ENCODE measurements at regions of chr16 and their contacts with region 1.

Region 1: GRCh38 chr16:78240462-78241222 is 141.2 kb downstream of the WWOX start:
- DNase-seq: peak; percentile 93 to 96
- H3K4me3 ChIP-seq: no peak overlapping the region
- H3K4me3 Mint-ChIP-seq: peak overlapping the region; percentile 52
- H3K27ac Mint-ChIP-seq: peak overlapping the region; percentile 97
- H3K4me1 ChIP-seq: peaks cover 65% of the 10 kb centered on the region
- H3K4me1 Mint-ChIP-seq: peaks cover 83% of the 10 kb centered on the region
- H3K27me3 ChIP-seq: no peaks in the 10 kb centered on the region
- H3K27me3 Mint-ChIP-seq: no peaks in the 10 kb centered on the region
- CTCF ChIP-seq: peak; percentile 60 to 73

Region 2: GRCh38 chr16:78122774-78123315 is 117.8 kb before region 1 on chr16:
- CTCF ChIA-PET with region 1: interaction called, 6 read pairs
- POLR2A ChIA-PET with region 1: no interaction called
- intact Hi-C with region 1: loop called (anchors 1 kb)
- DNase-seq: peak in 1 of 2 experiments; percentile 59
- H3K4me3 ChIP-seq: no peak overlapping the region
- H3K4me3 Mint-ChIP-seq: peak overlapping the region; percentile 17
- H3K27ac Mint-ChIP-seq: no peak overlapping the region
- H3K4me1 ChIP-seq: 0 out of 2 replicates have a peak, but pooled peaks cover 5% of the 10 kb centered on the region
- H3K4me1 Mint-ChIP-seq: peaks cover 25% of the 10 kb centered on the region
- H3K27me3 ChIP-seq: no peaks in the 10 kb centered on the region
- H3K27me3 Mint-ChIP-seq: no peaks in the 10 kb centered on the region
- CTCF ChIP-seq: peak; percentile 31 to 75

Region 3: GRCh38 chr16:78209951-78210661 is 30.5 kb before region 1 on chr16:
- CTCF ChIA-PET with region 1: interaction called, 4 read pairs
- POLR2A ChIA-PET with region 1: interaction called, 6 read pairs
- intact Hi-C with region 1: loop called (anchors 1 kb)
- DNase-seq: peak in 1 of 2 experiments; percentile 20
- H3K4me3 ChIP-seq: no peak overlapping the region
- H3K4me3 Mint-ChIP-seq: no peak overlapping the region
- H3K27ac Mint-ChIP-seq: peak overlapping the region; percentile 92
- H3K4me1 ChIP-seq: peaks cover 45% of the 10 kb centered on the region
- H3K4me1 Mint-ChIP-seq: peaks cover 49% of the 10 kb centered on the region
- H3K27me3 ChIP-seq: no peaks in the 10 kb centered on the region
- H3K27me3 Mint-ChIP-seq: no peaks in the 10 kb centered on the region
- CTCF ChIP-seq: no peak

Region 4: GRCh38 chr16:78292903-78293347 is 52.3 kb after region 1 on chr16:
- CTCF ChIA-PET with region 1: no interaction called
- POLR2A ChIA-PET with region 1: interaction called, 3 read pairs
- intact Hi-C with region 1: loop called (anchors 1 kb)
- DNase-seq: peak; percentile 49 to 58
- H3K4me3 ChIP-seq: no peak overlapping the region
- H3K4me3 Mint-ChIP-seq: peak overlapping the region; percentile 5
- H3K27ac Mint-ChIP-seq: peak overlapping the region; percentile 48
- H3K4me1 ChIP-seq: peaks cover 31% of the 10 kb centered on the region
- H3K4me1 Mint-ChIP-seq: peaks cover 36% of the 10 kb centered on the region
- H3K27me3 ChIP-seq: no peaks in the 10 kb centered on the region
- H3K27me3 Mint-ChIP-seq: no peaks in the 10 kb centered on the region
- CTCF ChIP-seq: no peak

Region 5: DNA sequence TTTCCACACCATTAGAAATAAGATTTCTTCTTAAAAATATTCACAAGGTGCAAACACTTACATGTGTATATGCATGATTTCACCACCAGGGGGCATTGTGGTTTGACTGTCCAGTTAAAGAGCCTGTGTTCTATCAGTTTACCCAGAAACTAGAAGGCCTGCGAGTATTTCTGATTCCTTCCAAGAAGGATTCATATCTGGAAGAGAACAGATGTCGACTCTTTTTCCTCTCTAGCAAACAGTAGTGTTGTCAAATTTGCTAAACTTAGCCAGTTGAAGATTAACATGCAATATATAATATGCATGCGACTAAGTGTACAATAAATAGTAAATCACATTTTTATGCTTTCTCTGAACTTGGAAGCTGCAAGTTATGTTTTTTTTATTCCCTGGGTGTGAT is 263.0 kb after region 1 on chr16:
- CTCF ChIA-PET with region 1: interaction called, 3 read pairs
- POLR2A ChIA-PET with region 1: no interaction called
- intact Hi-C with region 1: loop called (anchors 1 kb)
- DNase-seq: peak; percentile 44 to 64
- H3K4me3 ChIP-seq: no peak overlapping the region
- H3K4me3 Mint-ChIP-seq: no peak overlapping the region
- H3K27ac Mint-ChIP-seq: no peak overlapping the region
- H3K4me1 ChIP-seq: peaks cover 25% of the 10 kb centered on the region
- H3K4me1 Mint-ChIP-seq: peaks cover 26% of the 10 kb centered on the region
- H3K27me3 ChIP-seq: no peaks in the 10 kb centered on the region
- H3K27me3 Mint-ChIP-seq: no peaks in the 10 kb centered on the region
- CTCF ChIP-seq: peak; percentile 70 to 88

Region 6: GRCh38 chr16:78551487-78552085 is 310.9 kb after region 1 on chr16:
- CTCF ChIA-PET with region 1: no interaction called
- POLR2A ChIA-PET with region 1: no interaction called
- intact Hi-C with region 1: no loop called
- DNase-seq: no peak
- H3K4me3 ChIP-seq: no peak overlapping the region
- H3K4me3 Mint-ChIP-seq: no peak overlapping the region
- H3K27ac Mint-ChIP-seq: no peak overlapping the region
- H3K4me1 ChIP-seq: no peaks in the 10 kb centered on the region
- H3K4me1 Mint-ChIP-seq: peaks cover 6% of the 10 kb centered on the region
- H3K27me3 ChIP-seq: no peaks in the 10 kb centered on the region
- H3K27me3 Mint-ChIP-seq: no peaks in the 10 kb centered on the region
- CTCF ChIP-seq: no peak

Region 7: GRCh38 chr16:79601931-79602627 is 1361.4 kb after region 1 on chr16:
- CTCF ChIA-PET with region 1: no interaction called
- POLR2A ChIA-PET with region 1: no interaction called
- intact Hi-C with region 1: loop called (anchors 5 kb)
- DNase-seq: peak; percentile 77 to 83
- H3K4me3 ChIP-seq: peak overlapping the region; percentile 56
- H3K4me3 Mint-ChIP-seq: peak overlapping the region; percentile 96
- H3K27ac Mint-ChIP-seq: no peak overlapping the region
- H3K4me1 ChIP-seq: peaks cover 9% of the 10 kb centered on the region
- H3K4me1 Mint-ChIP-seq: peaks cover 6% of the 10 kb centered on the region
- H3K27me3 ChIP-seq: peaks cover 6% of the 10 kb centered on the region
- H3K27me3 Mint-ChIP-seq: peaks cover 25% of the 10 kb centered on the region
- CTCF ChIP-seq: peak; percentile 84 to 93

Measured in Caco-2 (cell line).